ENCODE measurements at regions of chr1 and their contacts with region 1.

Region 1: DNA sequence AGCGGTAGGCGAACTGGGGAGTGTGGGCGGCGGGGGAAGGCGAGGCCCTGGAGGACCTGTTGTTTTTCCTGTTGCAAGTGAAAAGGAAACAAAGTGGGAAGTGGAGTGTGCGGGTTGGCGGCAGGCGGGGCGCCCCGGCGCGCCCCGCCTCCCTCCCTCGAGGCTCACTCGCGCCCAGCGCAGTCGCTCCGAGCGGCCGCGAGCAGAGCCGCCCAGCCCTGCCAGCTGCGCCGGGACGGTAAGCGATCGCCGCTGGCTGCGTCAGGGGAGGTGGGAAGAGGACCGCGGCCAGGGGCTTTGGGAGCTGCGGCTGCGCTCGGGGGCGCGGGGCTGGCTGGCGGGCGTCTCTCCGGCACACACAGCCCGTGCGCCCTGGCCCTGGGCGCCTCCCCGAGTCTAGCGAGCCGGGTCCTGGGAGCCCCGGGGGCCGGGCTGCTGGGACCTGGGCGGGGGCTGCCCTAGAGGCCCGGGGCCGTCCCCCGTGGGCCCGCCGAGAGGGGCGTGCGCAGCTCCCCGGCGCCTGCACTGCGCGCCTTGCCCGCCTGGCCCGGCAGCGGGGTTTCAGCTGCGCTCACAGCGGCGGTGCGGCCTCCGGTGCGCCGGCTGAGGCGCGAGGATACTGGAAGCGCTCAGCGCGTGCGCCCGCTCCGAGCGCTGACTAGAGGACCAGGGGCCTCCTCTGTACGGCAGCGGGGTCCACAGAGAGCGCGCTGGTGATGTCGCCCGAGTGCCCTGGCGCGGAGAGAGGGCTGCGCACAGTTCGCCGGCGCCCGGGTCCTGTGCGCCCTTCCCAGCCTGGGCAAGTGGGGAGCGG is at the start of gene PIK3CD:
- DNase-seq: peak; percentile 69
- ATAC-seq: peak; percentile 24
- H3K4me3 Mint-ChIP-seq: peak within 1 kb of the TSS; percentile 98
- H3K27ac Mint-ChIP-seq: peak within 1 kb of the TSS; percentile 99
- H3K4me1 Mint-ChIP-seq: peaks cover 51% of the 10 kb centered on the region
- H3K27me3 Mint-ChIP-seq: no peaks in the 10 kb centered on the region
- total RNA-seq, gene PIK3CD: 96.4 to 114 TPM

Region 2: DNA sequence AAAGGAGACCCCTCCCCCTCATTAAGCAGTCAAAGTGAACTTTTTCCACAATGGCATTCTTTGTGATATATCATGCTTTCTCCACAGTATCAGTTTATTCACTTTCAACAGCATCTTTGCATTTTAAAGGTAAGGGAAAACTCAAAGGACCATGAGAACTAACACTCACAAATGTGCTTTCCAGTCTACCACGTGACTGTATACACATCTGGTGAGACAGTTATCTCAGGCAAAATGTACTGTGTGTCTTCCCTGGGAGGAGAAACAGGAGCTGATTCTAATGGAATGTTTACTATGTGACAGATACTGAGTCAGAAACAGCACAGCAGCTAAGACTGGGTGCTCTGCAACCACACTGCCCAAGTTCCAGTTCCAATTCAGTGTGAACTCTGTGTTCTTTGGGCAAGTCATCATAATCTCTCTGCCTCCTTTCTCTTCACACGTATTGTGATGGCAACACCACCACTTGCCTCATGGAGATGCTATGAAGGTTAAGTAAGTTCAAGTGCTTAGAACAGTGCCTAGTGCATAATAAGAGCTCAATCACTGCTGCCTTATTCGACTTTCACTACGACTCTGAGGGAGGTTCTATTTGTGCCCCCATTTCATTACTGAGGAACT is 1254.9 kb before region 1 on chr1:
- CTCF ChIA-PET with region 1: no interaction called
- POLR2A ChIA-PET with region 1: no interaction called
- intact Hi-C with region 1: loop called in 1 of 2 experiments (anchors 5 kb)
- DNase-seq: peak; percentile 68
- ATAC-seq: peak; percentile 84
- H3K4me3 Mint-ChIP-seq: peak overlapping the region; percentile 25
- H3K27ac Mint-ChIP-seq: peak overlapping the region; percentile 81
- H3K4me1 Mint-ChIP-seq: peaks cover 72% of the 10 kb centered on the region
- H3K27me3 Mint-ChIP-seq: no peaks in the 10 kb centered on the region

Region 3: GRCh38 chr1:9275567-9276034 is 376.2 kb before region 1 on chr1:
- CTCF ChIA-PET with region 1: no interaction called
- POLR2A ChIA-PET with region 1: no interaction called
- intact Hi-C with region 1: loop called in 1 of 2 experiments (anchors 5 kb)
- DNase-seq: peak; percentile 93
- ATAC-seq: peak; percentile 89
- H3K4me3 Mint-ChIP-seq: peak overlapping the region; percentile 2
- H3K27ac Mint-ChIP-seq: peak overlapping the region; percentile 47
- H3K4me1 Mint-ChIP-seq: peaks cover 33% of the 10 kb centered on the region
- H3K27me3 Mint-ChIP-seq: no peaks in the 10 kb centered on the region

Region 4: GRCh38 chr1:9671377-9672140 is 19.8 kb after region 1 on chr1:
- CTCF ChIA-PET with region 1: interaction called, 38 read pairs
- POLR2A ChIA-PET with region 1: interaction called, 7 read pairs
- intact Hi-C with region 1: loop called (anchors 1 kb)
- DNase-seq: peak; percentile 51
- ATAC-seq: peak; percentile 82
- H3K4me3 Mint-ChIP-seq: no peak overlapping the region
- H3K27ac Mint-ChIP-seq: peak overlapping the region; percentile 86
- H3K4me1 Mint-ChIP-seq: peaks cover 75% of the 10 kb centered on the region
- H3K27me3 Mint-ChIP-seq: no peaks in the 10 kb centered on the region

Region 5: GRCh38 chr1:9689011-9689706 is 37.4 kb after region 1 on chr1:
- CTCF ChIA-PET with region 1: interaction called, 10 read pairs
- POLR2A ChIA-PET with region 1: interaction called, 5 read pairs
- intact Hi-C with region 1: loop called (anchors 1 kb)
- DNase-seq: peak; percentile 93
- ATAC-seq: peak; percentile 78
- H3K4me3 Mint-ChIP-seq: peak overlapping the region; percentile 70
- H3K27ac Mint-ChIP-seq: peak overlapping the region; percentile 77
- H3K4me1 Mint-ChIP-seq: peaks cover 70% of the 10 kb centered on the region
- H3K27me3 Mint-ChIP-seq: no peaks in the 10 kb centered on the region

Region 6: DNA sequence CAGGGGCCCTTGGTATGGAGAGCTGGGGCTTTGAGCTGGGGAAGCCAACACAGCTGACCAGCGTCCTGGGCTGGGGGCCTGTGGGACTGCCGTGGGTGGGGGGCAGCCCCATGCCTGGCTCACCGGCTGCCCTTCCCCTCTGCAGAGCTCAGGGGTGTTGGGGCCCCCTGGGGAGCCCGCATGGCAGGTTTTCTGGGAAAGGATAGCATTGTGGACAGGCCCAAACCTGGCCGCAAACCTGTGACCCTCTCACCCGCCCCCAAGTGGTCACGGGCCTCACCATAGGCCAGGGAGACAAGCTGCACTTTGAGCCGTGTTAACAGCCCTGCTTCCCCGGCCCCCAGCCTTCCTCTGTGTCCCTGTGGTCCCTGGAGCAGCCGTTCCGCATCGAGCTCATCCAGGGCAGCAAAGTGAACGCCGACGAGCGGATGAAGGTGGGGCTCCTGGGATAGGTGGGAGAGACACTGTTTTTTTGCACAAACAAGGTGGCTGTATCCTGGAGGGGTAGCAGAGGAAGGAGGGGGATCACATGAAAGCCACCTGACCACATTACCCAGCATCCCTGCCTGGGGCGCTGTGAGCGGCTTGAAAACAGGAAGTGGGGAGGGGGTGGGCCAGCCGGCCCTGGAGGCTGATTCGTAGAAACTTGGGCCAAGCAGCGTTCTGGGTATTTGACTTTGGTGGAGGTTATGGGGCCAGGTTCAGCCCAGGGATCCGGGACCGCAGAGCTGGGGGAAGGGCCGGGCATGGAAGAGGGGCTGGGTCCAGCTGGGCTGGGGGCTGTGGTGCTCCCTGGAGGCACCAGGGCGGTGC is 65.6 kb after region 1 on chr1:
- CTCF ChIA-PET with region 1: interaction called, 10 read pairs
- POLR2A ChIA-PET with region 1: interaction called, 4 read pairs
- intact Hi-C with region 1: loop called in 1 of 2 experiments (anchors 1 kb)
- DNase-seq: peak; percentile 93
- ATAC-seq: peak; percentile 81
- H3K4me3 Mint-ChIP-seq: peak overlapping the region; percentile 76
- H3K27ac Mint-ChIP-seq: peak overlapping the region; percentile 93
- H3K4me1 Mint-ChIP-seq: peaks cover 62% of the 10 kb centered on the region
- H3K27me3 Mint-ChIP-seq: no peaks in the 10 kb centered on the region

Region 7: GRCh38 chr1:9724706-9725476 is 73.1 kb after region 1 on chr1:
- CTCF ChIA-PET with region 1: interaction called, 10 read pairs
- POLR2A ChIA-PET with region 1: interaction called, 4 read pairs
- intact Hi-C with region 1: loop called (anchors 1 kb)
- DNase-seq: peak; percentile 84
- ATAC-seq: peak; percentile 24
- H3K4me3 Mint-ChIP-seq: no peak overlapping the region
- H3K27ac Mint-ChIP-seq: no peak overlapping the region
- H3K4me1 Mint-ChIP-seq: peaks cover 61% of the 10 kb centered on the region
- H3K27me3 Mint-ChIP-seq: no peaks in the 10 kb centered on the region

Region 8: GRCh38 chr1:9842781-9843577 is 191.2 kb after region 1 on chr1:
- CTCF ChIA-PET with region 1: no interaction called
- POLR2A ChIA-PET with region 1: no interaction called
- intact Hi-C with region 1: no loop called
- DNase-seq: no peak
- ATAC-seq: no peak
- H3K4me3 Mint-ChIP-seq: no peak overlapping the region
- H3K27ac Mint-ChIP-seq: no peak overlapping the region
- H3K4me1 Mint-ChIP-seq: no peaks in the 10 kb centered on the region
- H3K27me3 Mint-ChIP-seq: no peaks in the 10 kb centered on the region